SK-N-SH (cell line): ENCODE measurements at regions of chr14 and their contacts with region 1.

Region 1: DNA sequence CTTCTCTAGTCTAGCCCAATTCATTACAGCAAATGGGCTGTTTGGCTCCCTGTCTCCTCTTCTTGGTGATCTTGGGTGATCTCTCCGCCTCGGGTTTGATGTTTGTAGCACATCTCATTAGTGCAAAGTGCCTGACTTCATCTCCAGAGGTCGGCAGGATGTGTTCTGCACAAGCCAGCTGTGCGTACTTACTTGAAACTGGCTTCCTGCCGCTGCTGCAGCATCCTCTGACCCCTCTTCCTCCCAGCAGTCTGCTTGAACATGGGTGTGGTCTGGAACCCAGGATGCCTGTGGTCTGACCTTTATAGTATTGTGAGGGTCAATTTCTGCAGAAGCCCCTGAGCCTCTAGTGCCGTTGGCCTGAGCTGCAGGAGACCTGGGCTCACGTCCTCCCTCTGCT is 99.2 kb downstream of the BEGAIN start:
- DNase-seq: no peak
- H3K4me3 ChIP-seq: no peak overlapping the region
- H3K27ac ChIP-seq: peak overlapping the region in 1 of 2 experiments; percentile 96; a peak in 2 of 4 replicates
- H3K4me1 ChIP-seq: peaks cover 4 to 69% of the 10 kb centered on the region in 2 experiments; a peak in 2 of 4 replicates
- H3K27me3 ChIP-seq: no peaks in the 10 kb centered on the region
- CTCF ChIP-seq: no peak
- EP300 ChIP-seq: no peak
- RAD21 ChIP-seq: no peak

Region 2: GRCh38 chr14:100503251-100503650 is 15.2 kb after region 1 on chr14:
- CTCF ChIA-PET with region 1: interaction called, 12 read pairs
- POLR2A ChIA-PET with region 1: no interaction called
- DNase-seq: no peak
- H3K4me3 ChIP-seq: no peak overlapping the region
- H3K27ac ChIP-seq: no peak overlapping the region
- H3K4me1 ChIP-seq: peaks cover 0 to 16% of the 10 kb centered on the region in 2 experiments; a peak in 1 of 4 replicates
- H3K27me3 ChIP-seq: no peaks in the 10 kb centered on the region
- CTCF ChIP-seq: no peak
- EP300 ChIP-seq: no peak
- RAD21 ChIP-seq: no peak

Region 3: DNA sequence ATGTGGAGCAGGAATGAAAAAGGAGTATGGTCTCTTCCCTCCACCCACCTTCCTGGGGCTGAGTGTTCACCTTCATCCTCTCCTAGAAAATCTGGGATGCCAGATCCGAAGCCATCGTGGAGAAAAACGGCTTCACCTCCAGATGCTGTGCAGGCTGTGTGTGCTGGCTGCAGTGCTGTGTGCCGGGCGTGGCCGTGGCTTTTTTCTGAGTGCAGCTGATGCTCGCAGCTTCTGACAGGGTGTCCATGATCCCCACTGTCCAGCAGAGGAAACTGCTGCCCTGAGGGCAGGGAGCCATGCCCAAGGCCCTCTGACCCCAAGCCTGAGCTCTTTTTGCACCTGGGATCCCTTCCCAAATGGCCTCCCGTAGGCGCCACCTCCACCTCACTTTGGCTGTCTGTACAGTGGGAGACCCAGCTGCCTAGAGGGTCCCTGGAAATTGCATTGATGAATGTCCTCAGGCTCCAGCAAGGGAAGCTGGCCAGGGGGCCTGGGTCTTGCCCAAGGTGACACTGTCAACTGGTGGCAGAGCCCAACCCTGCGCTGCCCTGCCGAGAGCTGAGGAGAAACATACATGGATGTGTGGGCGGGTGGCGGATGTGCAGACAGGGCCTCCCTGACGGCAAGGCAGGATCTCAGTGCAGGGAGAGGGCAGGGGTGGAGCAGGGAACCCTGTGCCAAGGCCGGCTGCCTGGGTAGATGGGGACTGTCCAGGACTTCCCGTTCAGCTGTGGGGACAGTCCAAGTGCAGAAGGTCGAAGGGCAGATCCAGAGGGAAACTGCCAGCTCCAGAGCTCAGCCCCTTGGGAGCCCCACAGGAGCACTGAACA is 45.8 kb after region 1 on chr14:
- CTCF ChIA-PET with region 1: interaction called, 17 read pairs
- POLR2A ChIA-PET with region 1: interaction called, 3 read pairs
- DNase-seq: peak; percentile 59
- H3K4me3 ChIP-seq: no peak overlapping the region
- H3K27ac ChIP-seq: peak overlapping the region in 1 of 2 experiments; percentile 73; a peak in 2 of 4 replicates
- H3K4me1 ChIP-seq: peaks cover 0 to 57% of the 10 kb centered on the region in 2 experiments; a peak in 1 of 4 replicates
- H3K27me3 ChIP-seq: no peaks in the 10 kb centered on the region
- CTCF ChIP-seq: no peak
- EP300 ChIP-seq: no peak
- RAD21 ChIP-seq: 0 out of 2 replicates have a peak, but pooled peaks have one; percentile 0